Right ventricle myocardium inferior (tissue), 1 donor: ENCODE measurements at regions of chr7 and their contacts with region 1.

Region 1: GRCh38 chr7:22127835-22128527 is 182.3 kb upstream of the CDCA7L start:
- DNase-seq: no peak
- ATAC-seq: no peak

Region 2: GRCh38 chr7:22219036-22219435 is 91.1 kb after region 1 on chr7:
- intact Hi-C with region 1: loop called (anchors 5 kb)
- DNase-seq: no peak
- ATAC-seq: no peak